CD4-positive, alpha-beta memory T cell (primary cell): ENCODE measurements at regions of chr12 and their contacts with region 1.

Region 1: DNA sequence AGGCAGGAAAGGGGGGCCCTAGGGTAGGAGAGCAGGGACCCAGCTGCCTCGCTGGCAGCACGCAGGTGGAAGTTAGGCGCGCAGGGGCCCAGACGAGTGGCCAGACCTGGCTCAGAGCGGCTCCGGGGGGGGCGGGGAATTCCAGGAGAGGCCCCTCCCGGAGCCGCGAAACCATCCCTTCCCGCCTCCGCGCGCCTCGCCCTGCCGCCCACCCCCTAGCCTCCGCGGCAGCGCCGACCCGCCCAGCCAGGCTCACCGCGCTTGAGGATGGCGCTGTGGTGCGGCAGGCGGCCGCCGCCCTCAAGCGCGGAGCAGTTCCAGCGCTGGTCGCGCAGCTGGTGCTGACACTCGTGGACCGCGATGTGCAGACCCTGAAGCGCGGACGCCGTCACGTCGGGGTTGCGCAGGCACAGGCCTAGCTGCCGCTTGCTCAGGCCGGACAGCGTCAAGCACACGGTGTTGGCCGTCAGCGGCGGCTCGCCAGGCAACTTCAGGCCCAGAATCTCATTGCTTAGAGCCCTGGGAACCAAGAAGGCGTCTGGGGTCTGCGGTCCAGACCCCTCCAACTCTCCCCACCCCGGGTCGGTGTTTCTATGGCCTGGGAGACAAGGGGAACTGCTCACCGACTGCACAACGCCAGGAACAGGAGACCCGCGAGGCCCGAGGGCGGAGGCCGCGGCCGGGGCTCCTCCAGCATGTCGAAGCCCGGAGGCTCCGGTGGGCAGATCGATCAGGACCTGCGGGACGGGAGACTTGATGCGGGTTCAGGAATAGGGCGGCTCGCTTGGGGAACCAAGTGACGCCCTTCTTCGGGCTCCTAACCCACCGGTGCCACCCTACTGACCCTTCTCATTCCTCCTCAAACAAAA is 1.5 kb downstream of the WNT10B start:
- DNase-seq: peak in 3 of 5 donors; percentile 37 to 47 (median 38)
- H3K4me3 ChIP-seq: peak overlapping the region in 1 of 2 donors; percentile 41
- H3K4me3 Mint-ChIP-seq: peak overlapping the region; percentile 12 to 87 (median 64)
- H3K27ac ChIP-seq: no peak overlapping the region
- H3K27ac Mint-ChIP-seq: peak overlapping the region in 2 of 7 donors; percentile 44 to 51
- H3K4me1 ChIP-seq: peaks cover 39% of the 10 kb centered on the region
- H3K4me1 Mint-ChIP-seq: peaks cover 13 to 39% (median 26%) of the 10 kb centered on the region in 4 donors
- H3K27me3 ChIP-seq: peaks cover 26% of the 10 kb centered on the region
- H3K27me3 Mint-ChIP-seq: peaks cover 27 to 30% of the 10 kb centered on the region in 2 donors

Region 2: GRCh38 chr12:48957141-48958048 is 12.7 kb before region 1 on chr12 and contains the start of gene ARF3:
- CTCF ChIA-PET with region 1: interaction called, 10 read pairs
- POLR2A ChIA-PET with region 1: interaction called, 18 read pairs
- intact Hi-C with region 1: no loop called
- DNase-seq: peak; percentile 91 to 93 (median 93)
- H3K4me3 ChIP-seq: peak within 1 kb of the TSS; percentile 45 to 71
- H3K4me3 Mint-ChIP-seq: peak within 1 kb of the TSS; percentile 92 to 98 (median 96)
- H3K27ac ChIP-seq: peak within 1 kb of the TSS; percentile 73
- H3K27ac Mint-ChIP-seq: peak within 1 kb of the TSS; percentile 91 to 97 (median 95)
- H3K4me1 ChIP-seq: peaks cover 34% of the 10 kb centered on the region
- H3K4me1 Mint-ChIP-seq: peaks cover 27 to 54% (median 38%) of the 10 kb centered on the region in 4 donors
- H3K27me3 ChIP-seq: no peaks in the 10 kb centered on the region
- H3K27me3 Mint-ChIP-seq: peaks cover 1 to 2% of the 10 kb centered on the region in 2 donors
- total RNA-seq, gene ARF3: 69.8 to 77.5 TPM

Region 3: GRCh38 chr12:49031553-49032162 is 61.6 kb after region 1 on chr12:
- CTCF ChIA-PET with region 1: no interaction called
- POLR2A ChIA-PET with region 1: no interaction called
- intact Hi-C with region 1: no loop called
- DNase-seq: no peak
- H3K4me3 ChIP-seq: no peak overlapping the region
- H3K4me3 Mint-ChIP-seq: no peak overlapping the region
- H3K27ac ChIP-seq: no peak overlapping the region
- H3K27ac Mint-ChIP-seq: peak overlapping the region in 1 of 7 donors; percentile 46
- H3K4me1 ChIP-seq: no peaks in the 10 kb centered on the region
- H3K4me1 Mint-ChIP-seq: peaks cover 0 to 6% (median 0%) of the 10 kb centered on the region in 4 donors
- H3K27me3 ChIP-seq: no peaks in the 10 kb centered on the region
- H3K27me3 Mint-ChIP-seq: no peaks in the 10 kb centered on the region